Cardiac septum (tissue), 1 donor: ENCODE measurements at regions of chr9 and their contacts with region 1.

Region 1: GRCh38 chr9:70602321-70603019 is 188.0 kb upstream of the KLF9 start:
- DNase-seq: no peak

Region 2: DNA sequence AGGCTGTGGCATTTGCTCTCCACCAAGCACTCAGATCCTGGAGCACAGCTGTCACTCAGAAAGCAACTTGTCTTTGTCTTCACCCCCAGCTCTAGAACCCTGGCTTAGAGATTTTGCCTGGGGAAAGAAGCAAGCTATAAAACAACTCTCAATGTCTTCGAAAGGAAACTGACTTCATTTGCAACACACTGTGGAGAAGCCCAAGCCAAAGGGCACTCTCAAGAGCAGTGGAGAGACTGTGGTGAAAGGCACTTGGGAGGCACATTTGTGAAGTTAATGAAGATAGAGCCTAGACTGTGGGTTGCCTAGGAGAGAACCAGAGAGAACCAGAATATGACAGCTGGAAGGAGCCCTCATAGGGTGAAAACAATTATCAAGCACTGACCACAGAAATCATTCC is 678.5 kb before region 1 on chr9:
- intact Hi-C with region 1: no loop called
- DNase-seq: no peak

Region 3: GRCh38 chr9:69971643-69972449 is 630.6 kb before region 1 on chr9:
- intact Hi-C with region 1: loop called (anchors 10 kb)
- DNase-seq: peak; percentile 80

Region 4: GRCh38 chr9:70258692-70259511 is 343.6 kb before region 1 on chr9 and contains the start of gene SMC5:
- intact Hi-C with region 1: loop called (anchors 2 kb)
- DNase-seq: peak; percentile 96
- total RNA-seq, gene SMC5: 15.0 TPM

Region 5: DNA sequence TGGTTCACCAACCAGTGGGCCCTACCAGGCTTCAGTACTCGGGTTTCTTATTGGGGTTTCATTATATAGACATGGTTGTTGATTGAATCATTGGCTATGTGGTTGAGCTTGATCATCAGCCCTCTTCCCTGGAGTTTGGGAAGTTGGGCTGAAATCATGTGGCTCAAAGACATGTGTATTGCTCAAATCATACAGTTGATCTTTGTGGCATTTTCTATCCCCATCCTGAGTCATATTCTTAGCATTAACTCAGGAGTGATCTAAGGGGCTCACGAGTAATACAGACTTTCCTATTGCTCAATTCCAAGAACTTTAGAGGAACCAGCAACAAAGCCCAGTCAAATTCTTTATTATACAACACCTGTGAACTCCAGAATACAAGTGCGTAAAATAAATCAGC is 277.5 kb before region 1 on chr9:
- intact Hi-C with region 1: no loop called
- DNase-seq: no peak

Region 6: GRCh38 chr9:70352802-70353201 is 249.7 kb before region 1 on chr9:
- intact Hi-C with region 1: loop called (anchors 2 kb)
- DNase-seq: no peak

Region 7: GRCh38 chr9:70484210-70485130 is 118.0 kb before region 1 on chr9:
- intact Hi-C with region 1: loop called (anchors 5 kb)
- DNase-seq: no peak

Region 8: DNA sequence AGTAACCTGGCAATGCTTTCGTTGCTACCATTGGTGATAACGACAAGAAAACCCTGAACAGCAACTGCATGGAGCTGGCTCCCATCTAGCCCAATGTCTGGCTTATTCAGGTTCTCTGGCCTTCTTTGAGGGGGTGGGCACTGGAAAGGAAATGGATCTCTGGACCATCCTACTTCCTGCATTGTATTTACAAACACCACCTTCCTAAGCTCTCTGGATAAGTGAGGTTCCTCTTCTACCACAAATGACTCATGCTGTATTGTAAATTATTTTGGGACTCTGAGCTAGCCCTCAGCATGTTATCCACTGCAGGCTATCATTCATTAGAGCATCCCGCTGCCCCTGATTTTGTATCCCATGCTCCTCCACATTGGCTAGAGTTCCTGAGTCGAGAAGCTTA is 51.1 kb before region 1 on chr9:
- intact Hi-C with region 1: no loop called
- DNase-seq: no peak